HEK293 (cell line): ENCODE measurements at regions of chr15 and their contacts with region 1.

Region 1: GRCh38 chr15:45037936-45038335 is 14.9 kb downstream of the SORD start:
- H3K4me3 ChIP-seq: no peak overlapping the region
- H3K27ac ChIP-seq: no peak overlapping the region
- H3K4me1 ChIP-seq: no peaks in the 10 kb centered on the region
- CTCF ChIP-seq: no peak

Region 2: GRCh38 chr15:44968475-44968874 is 69.5 kb before region 1 on chr15:
- CTCF ChIA-PET with region 1: interaction called, 21 read pairs
- POLR2A ChIA-PET with region 1: no interaction called
- H3K4me3 ChIP-seq: no peak overlapping the region
- H3K27ac ChIP-seq: no peak overlapping the region
- H3K4me1 ChIP-seq: no peaks in the 10 kb centered on the region
- CTCF ChIP-seq: no peak